Cardiac septum (tissue), 1 donor: ENCODE measurements at regions of chr2 and their contacts with region 1.

Region 1: GRCh38 chr2:51028829-51029228 is 3.1 kb downstream of the NRXN1 start:
- DNase-seq: peak; percentile 76

Region 2: DNA sequence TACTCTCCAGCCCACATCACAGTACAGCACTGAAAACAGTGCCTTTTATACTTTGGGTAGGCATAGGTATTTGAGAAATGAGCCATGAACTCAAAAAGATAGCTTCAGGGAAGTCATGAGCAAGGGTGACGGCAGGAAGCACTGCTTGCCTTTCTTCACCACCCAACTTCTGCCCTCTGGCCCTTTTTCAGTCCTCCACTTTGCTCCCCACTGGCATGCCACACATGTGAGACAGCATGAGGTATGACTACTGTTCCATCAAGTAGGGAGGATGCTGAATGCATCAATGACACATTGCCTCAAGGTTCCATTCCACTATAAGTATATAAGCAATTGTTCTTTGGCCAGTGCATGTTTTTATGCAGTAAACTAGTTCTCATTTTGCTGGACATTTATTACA is 369.9 kb before region 1 on chr2:
- intact Hi-C with region 1: loop called (anchors 5 kb)
- DNase-seq: no peak